OCI-LY7 (cell line): ENCODE measurements at regions of chr16 and their contacts with region 1.

Region 1: GRCh38 chr16:35795361-35796029 is 2336.1 kb downstream of the TP53TG3F start:
- DNase-seq: no peak
- H3K4me3 ChIP-seq: no peak overlapping the region
- H3K27ac ChIP-seq: no peak overlapping the region
- H3K4me1 ChIP-seq: no peaks in the 10 kb centered on the region
- CTCF ChIP-seq: no peak

Region 2: GRCh38 chr16:35733971-35734702 is 61.4 kb before region 1 on chr16:
- CTCF ChIA-PET with region 1: no interaction called
- POLR2A ChIA-PET with region 1: no interaction called
- intact Hi-C with region 1: loop called (anchors 10 kb)
- DNase-seq: no peak
- H3K4me3 ChIP-seq: no peak overlapping the region
- H3K27ac ChIP-seq: no peak overlapping the region
- H3K4me1 ChIP-seq: no peaks in the 10 kb centered on the region
- CTCF ChIP-seq: no peak